A549 (cell line): ENCODE measurements at regions of chr2 and their contacts with region 1.

Region 1: DNA sequence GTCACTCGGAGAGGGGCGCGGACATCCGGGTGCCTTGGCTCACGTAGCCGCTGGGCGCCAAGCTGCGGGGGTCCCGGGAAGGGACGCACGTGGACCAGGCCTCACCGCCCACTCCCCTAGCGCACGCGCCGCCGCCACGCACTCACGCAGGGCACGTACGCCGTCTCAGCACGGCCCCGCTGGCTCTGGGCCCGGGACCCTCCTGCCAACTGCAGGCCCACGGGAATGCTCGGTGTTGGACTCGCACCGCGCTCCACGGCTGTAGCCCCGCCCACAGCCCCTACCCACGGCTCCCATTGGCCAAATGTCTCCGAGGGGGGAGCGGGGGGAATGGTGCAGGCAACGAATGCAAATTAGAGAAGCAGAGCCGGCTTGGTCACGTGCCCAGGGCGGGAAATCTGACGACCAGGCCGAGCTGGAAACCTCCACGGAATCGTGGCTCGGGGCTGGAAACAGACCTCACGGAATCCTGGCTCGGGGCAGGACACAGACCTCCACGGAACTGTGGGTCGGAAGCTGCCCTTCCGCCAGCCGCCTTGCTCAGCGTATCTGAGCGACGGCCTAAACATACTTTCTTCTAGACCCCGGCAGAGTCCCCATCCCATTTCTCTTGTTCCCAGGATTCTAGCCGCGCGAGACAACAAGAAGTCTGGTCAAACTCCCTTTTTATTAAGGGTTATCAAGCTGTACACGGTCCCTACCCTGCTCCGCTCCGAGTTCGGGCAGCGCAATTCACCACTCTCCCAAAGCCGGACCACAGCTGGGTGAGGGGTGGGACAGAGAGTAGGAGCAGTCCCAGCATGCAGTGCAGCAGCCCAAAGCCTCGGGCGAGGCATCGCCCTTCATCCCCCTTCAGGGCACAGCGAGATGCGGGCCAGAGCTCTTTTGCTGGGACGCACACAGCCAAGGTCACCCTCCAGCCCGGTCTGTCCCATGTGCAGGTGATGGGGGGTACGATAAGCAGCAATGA is at the start of gene ABCB6:
- DNase-seq: peak; percentile 92
- ATAC-seq: peak; percentile 65 to 84
- H3K4me3 ChIP-seq: peak within 1 kb of the TSS; percentile 65
- H3K27ac ChIP-seq: peak within 1 kb of the TSS; percentile 92 to 95
- H3K4me1 ChIP-seq: peaks cover 30% of the 10 kb centered on the region
- CTCF ChIP-seq: no peak
- EP300 ChIP-seq: no peak
- POLR2A ChIP-seq: peak; percentile 94
- RAD21 ChIP-seq: no peak
- polyA plus RNA-seq, gene ABCB6: 62.5 and 71.0 TPM in 2 replicates

Region 2: DNA sequence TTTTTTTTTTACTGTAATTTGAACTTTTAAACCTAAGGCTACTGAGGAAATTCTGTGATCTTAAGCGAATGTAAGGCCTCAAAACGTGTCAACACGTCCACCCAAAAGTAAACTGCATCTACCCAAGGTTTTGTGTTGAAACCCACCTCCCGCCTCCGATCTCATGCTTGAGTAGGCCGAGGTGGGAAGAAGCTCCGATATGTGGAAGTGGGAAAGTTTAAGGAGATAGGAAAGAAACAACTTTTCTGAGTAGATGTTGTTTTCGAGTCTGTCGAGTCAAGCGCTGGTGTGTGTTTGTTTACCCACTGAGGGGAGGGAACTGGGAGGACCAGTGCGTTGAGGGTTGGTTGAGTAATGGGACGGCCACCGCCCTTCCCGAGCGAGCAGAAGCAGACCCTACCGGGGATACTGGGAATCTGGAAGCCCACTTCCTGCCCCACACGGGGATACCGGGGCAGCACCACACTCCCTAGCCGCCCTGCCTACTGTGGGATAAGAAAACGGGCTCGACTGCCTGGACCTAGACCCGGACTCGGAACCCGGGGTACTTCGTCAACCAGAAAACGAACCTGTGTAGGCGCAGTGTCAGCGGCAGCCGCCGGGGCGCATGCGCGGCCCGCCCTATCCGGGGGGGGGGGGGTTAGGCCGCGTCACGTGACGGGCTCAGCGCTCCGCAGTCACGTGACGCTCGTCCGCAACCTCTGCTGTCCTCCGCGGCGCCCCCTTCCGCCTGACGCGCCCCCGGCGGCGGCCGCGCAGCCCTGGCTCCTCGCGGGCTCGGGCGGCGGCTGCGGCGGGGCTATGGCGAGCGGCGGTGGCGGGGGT is 41.3 kb before region 1 on chr2 and contains the start of gene RETREG2:
- CTCF ChIA-PET with region 1: interaction called, 4 read pairs
- POLR2A ChIA-PET with region 1: interaction called, 15 read pairs
- DNase-seq: peak; percentile 87 to 94
- ATAC-seq: peak; percentile 83 to 88
- H3K4me3 ChIP-seq: peak within 1 kb of the TSS; percentile 84
- H3K27ac ChIP-seq: peak within 1 kb of the TSS; percentile 83 to 96
- H3K4me1 ChIP-seq: peaks cover 15% of the 10 kb centered on the region
- CTCF ChIP-seq: peak; percentile 54
- EP300 ChIP-seq: no peak
- POLR2A ChIP-seq: peak; percentile 69; the same call in 1 of the 2 replicates
- RAD21 ChIP-seq: no peak
- polyA plus RNA-seq, gene RETREG2: 67.5 and 83.2 TPM in 2 replicates

Region 3: DNA sequence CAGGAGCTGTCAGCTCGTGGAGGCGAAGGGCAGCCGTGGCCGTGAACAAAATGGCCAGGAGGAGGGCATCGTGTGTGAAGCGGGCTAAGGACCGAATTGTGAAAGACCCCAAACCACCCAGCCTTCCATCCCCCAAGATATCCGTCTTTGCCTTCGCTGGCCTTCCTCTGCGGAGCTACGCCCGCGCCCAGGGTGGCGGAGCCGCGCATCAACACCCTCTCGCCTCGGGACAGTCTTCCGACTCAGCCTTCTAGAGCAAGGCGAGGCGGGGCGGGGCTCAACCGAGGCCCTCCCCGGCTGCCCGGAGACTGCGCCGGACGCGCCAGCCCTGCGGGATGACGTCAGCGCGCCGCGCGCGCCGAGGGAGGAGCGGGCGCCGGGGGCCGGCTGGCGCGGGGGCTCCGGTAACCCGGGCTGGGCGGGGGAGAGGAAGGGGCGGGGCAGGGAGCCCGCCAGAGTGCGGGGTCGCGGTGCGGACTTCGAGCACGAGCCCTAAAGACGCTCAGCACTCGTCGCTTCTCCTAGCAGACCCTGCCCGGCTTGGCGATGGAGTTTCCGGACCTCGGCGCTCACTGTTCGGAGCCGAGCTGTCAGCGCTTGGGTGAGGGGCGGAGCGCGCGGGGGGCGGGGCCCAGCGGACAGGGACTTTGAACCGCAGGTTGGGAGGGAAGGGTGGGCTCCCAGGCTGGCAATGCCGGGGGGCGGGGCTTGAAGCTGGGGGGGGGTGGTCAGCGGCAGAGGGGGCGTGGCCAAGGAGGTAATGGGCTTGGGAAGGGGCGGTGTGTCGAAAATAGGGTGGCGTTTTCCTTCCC is 12.4 kb before region 1 on chr2 and contains the start of gene ZFAND2B:
- CTCF ChIA-PET with region 1: interaction called, 7 read pairs
- POLR2A ChIA-PET with region 1: interaction called, 25 read pairs
- DNase-seq: peak; percentile 89 to 91
- ATAC-seq: peak; percentile 85 to 93
- H3K4me3 ChIP-seq: peak within 1 kb of the TSS; percentile 53
- H3K27ac ChIP-seq: peak within 1 kb of the TSS; percentile 95 to 98
- H3K4me1 ChIP-seq: peaks cover 16% of the 10 kb centered on the region
- CTCF ChIP-seq: no peak
- EP300 ChIP-seq: no peak
- POLR2A ChIP-seq: peak; percentile 96
- RAD21 ChIP-seq: no peak
- polyA plus RNA-seq, gene ZFAND2B: 29.1 and 30.3 TPM in 2 replicates

Region 4: GRCh38 chr2:219229305-219230058 is 10.5 kb after region 1 on chr2 and contains the starts of genes ANKZF1 and ATG9A:
- CTCF ChIA-PET with region 1: interaction called, 5 read pairs
- POLR2A ChIA-PET with region 1: interaction called, 10 read pairs
- DNase-seq: peak; percentile 97 to 99
- ATAC-seq: peak; percentile 96 to 99
- H3K4me3 ChIP-seq: peak within 1 kb of the TSS; percentile 85
- H3K27ac ChIP-seq: peak within 1 kb of the TSS; percentile 82 to 95
- H3K4me1 ChIP-seq: peaks cover 19% of the 10 kb centered on the region
- CTCF ChIP-seq: no peak
- EP300 ChIP-seq: no peak
- POLR2A ChIP-seq: peak; percentile 53
- RAD21 ChIP-seq: no peak; a peak in 1 of 5 replicates
- polyA plus RNA-seq, gene ANKZF1: 29.5 and 30.3 TPM in 2 replicates
- polyA plus RNA-seq, gene ATG9A: 75.2 and 115 TPM in 2 replicates

Region 5: DNA sequence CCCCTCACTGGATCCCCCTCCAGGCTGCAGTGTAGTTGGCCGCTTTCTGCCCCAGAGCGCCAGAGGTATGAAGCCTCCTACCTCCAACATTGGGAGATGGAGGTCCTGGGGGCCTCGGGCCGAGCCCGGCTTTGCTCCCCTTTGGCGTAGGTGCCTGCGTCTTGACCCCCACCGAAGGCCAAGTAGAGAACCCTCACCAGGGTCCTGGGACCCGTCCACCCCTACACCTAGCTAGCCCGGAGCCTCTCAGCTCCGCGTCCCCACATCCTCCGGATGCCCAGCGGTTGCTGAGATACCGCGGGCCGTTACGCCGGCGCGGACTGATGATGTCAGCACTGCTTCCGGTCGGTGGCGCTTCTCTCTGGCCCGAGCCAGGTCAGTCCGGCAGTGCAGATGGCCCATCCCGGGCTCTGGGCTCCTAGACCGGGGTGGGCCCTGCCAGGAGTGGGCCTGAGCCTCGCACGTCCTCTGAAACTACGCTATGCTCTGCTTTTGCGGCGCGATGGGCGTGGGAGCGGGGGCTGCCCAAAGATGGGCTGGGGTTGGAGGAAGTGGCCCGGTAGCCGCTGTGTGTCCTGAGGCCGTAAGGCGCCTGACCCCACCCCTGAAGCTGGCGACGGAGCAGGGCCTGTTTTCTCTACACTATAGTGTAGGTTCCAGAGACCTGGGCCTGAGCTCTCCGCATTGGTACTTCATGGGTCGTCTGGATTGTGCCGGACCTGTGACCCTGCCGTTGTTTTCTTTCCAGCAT is 26.3 kb after region 1 on chr2 and contains the starts of genes GLB1L and STK16:
- CTCF ChIA-PET with region 1: interaction called, 4 read pairs
- POLR2A ChIA-PET with region 1: interaction called, 22 read pairs
- DNase-seq: peak; percentile 94
- ATAC-seq: peak; percentile 64 to 82
- H3K4me3 ChIP-seq: peak within 1 kb of the TSS; percentile 78
- H3K27ac ChIP-seq: peak within 1 kb of the TSS; percentile 90 to 96
- H3K4me1 ChIP-seq: peaks cover 50% of the 10 kb centered on the region
- CTCF ChIP-seq: no peak
- EP300 ChIP-seq: no peak
- POLR2A ChIP-seq: peak; percentile 74
- RAD21 ChIP-seq: no peak; a peak in 1 of 5 replicates
- polyA plus RNA-seq, gene GLB1L: 8.7 and 10.0 TPM in 2 replicates
- polyA plus RNA-seq, gene STK16: 43.3 and 53.0 TPM in 2 replicates